Activated T-helper 2 cell treated with anti-CD3 and anti-CD28 coated beads, Interferon-gamma antibody, Interleukin-2, Interleukin-4, amounts not matched to agents 10 μg/mL and 5 μg/mL and 100 μg/mL, durations not matched to agents 14 hours and 24 hours and 36 hours (primary cell): ENCODE measurements at regions of chr16 and their contacts with region 1.

Region 1: GRCh38 chr16:90031931-90032687 is 12.9 kb upstream of the DBNDD1 start:
- DNase-seq: no peak
- H3K4me3 Mint-ChIP-seq: no peak overlapping the region
- H3K27ac Mint-ChIP-seq: peak overlapping the region; percentile 51
- H3K4me1 Mint-ChIP-seq: no peaks in the 10 kb centered on the region
- H3K27me3 Mint-ChIP-seq: no peaks in the 10 kb centered on the region

Region 2: DNA sequence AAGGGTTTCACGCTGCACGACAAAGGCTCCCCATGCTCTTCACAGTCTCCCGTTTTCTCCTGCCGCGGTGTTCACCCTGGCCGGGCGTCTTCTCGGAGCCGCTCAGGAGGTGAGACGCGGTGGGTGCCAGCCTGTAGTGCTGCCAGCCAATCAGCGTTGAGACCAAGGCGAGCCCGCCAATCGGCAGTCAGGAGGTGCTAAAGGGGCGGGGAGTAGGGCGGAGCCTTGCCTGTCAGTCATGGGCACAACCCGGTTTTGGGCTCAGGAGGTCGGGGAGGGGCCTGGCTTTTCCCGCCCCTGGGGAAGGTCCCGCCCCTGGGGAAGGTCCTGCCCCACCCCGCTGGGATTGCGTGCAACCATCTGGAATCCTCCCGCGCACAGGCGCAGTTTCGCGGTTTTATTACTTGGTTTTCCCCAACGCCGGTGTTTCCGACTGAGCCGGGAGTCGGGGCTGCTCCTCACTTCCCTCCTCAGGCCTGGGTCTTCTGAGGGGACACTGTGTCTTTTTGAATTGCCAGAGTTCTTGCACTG is 45.2 kb after region 1 on chr16 and contains the start of gene PRDM7:
- intact Hi-C with region 1: loop called (anchors 5 kb)
- DNase-seq: peak; percentile 96
- H3K4me3 Mint-ChIP-seq: peak within 1 kb of the TSS; percentile 66
- H3K27ac Mint-ChIP-seq: peak within 1 kb of the TSS; percentile 48
- H3K4me1 Mint-ChIP-seq: peaks cover 28% of the 10 kb centered on the region
- H3K27me3 Mint-ChIP-seq: peaks cover 16% of the 10 kb centered on the region
- total RNA-seq, gene PRDM7: not detected in 2 replicates